ENCODE measurements at regions of chr10 and their contacts with region 1.

Region 1: GRCh38 chr10:68471586-68472408 is at the start of gene DNA2:
- DNase-seq: peak; percentile 96 to 97
- H3K4me3 ChIP-seq: peak within 1 kb of the TSS; percentile 79
- H3K4me3 Mint-ChIP-seq: peak within 1 kb of the TSS; percentile 93
- H3K27ac Mint-ChIP-seq: peak within 1 kb of the TSS; percentile 98
- H3K4me1 ChIP-seq: peaks cover 13% of the 10 kb centered on the region
- H3K4me1 Mint-ChIP-seq: peaks cover 23% of the 10 kb centered on the region
- H3K27me3 ChIP-seq: no peaks in the 10 kb centered on the region
- H3K27me3 Mint-ChIP-seq: no peaks in the 10 kb centered on the region
- CTCF ChIP-seq: no peak
- total RNA-seq, gene DNA2: 85.5 and 88.1 TPM in 2 replicates

Region 2: DNA sequence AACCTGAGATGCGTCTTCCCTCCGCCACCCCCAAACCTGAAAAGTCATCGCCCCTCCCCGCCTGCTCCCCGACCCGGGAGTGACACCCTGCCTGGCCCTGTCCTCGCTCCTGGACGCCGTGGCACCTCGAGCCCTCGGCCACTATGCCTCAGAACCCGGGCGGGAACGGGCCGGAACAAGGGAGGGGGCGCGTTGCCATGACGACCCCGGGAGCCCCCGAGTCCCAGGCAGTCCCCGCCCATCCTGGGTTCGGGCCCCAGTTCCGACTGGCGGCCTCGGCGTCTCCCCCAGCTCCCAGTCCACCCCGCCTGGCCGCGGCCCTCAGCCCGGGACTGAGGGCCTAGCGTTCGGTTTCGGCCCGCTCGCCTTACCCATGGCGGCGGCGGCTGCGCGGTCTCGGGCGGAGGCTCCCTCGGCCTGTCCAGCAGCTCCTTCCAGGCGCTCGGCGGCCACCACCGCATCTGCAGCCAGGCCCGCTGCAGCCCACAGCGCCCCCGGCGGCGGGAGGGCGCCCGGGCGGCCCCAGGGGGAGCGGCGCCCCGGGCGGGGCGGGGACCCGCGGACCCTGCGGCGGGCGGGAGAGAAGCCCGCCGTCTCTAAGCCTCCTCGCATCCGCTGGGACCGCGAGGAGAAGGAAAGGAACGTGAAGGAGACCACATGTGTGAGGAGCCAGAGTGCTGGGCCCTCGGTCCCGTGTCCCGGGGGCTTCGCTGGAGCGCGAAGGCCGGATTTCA is 64.8 kb before region 1 on chr10 and contains the start of gene RUFY2:
- CTCF ChIA-PET with region 1: interaction called, 5 read pairs
- POLR2A ChIA-PET with region 1: interaction called, 6 read pairs
- intact Hi-C with region 1: loop called (anchors 2 kb)
- DNase-seq: peak; percentile 89 to 98
- H3K4me3 ChIP-seq: peak within 1 kb of the TSS; percentile 99
- H3K4me3 Mint-ChIP-seq: peak within 1 kb of the TSS; percentile 95
- H3K27ac Mint-ChIP-seq: peak within 1 kb of the TSS; percentile 97
- H3K4me1 ChIP-seq: peaks cover 7% of the 10 kb centered on the region; the same call in 1 of the 2 replicates
- H3K4me1 Mint-ChIP-seq: peaks cover 16% of the 10 kb centered on the region
- H3K27me3 ChIP-seq: no peaks in the 10 kb centered on the region
- H3K27me3 Mint-ChIP-seq: no peaks in the 10 kb centered on the region
- CTCF ChIP-seq: peak; percentile 63 to 81
- total RNA-seq, gene RUFY2: 42.4 and 44.0 TPM in 2 replicates

Region 3: GRCh38 chr10:68435803-68436202 is 36.0 kb before region 1 on chr10:
- CTCF ChIA-PET with region 1: no interaction called
- POLR2A ChIA-PET with region 1: no interaction called
- intact Hi-C with region 1: no loop called
- DNase-seq: no peak
- H3K4me3 ChIP-seq: no peak overlapping the region
- H3K4me3 Mint-ChIP-seq: no peak overlapping the region
- H3K27ac Mint-ChIP-seq: no peak overlapping the region
- H3K4me1 ChIP-seq: no peaks in the 10 kb centered on the region
- H3K4me1 Mint-ChIP-seq: no peaks in the 10 kb centered on the region
- H3K27me3 ChIP-seq: no peaks in the 10 kb centered on the region
- H3K27me3 Mint-ChIP-seq: no peaks in the 10 kb centered on the region
- CTCF ChIP-seq: no peak

Region 4: GRCh38 chr10:68489919-68490318 is 18.1 kb after region 1 on chr10:
- CTCF ChIA-PET with region 1: no interaction called
- POLR2A ChIA-PET with region 1: no interaction called
- intact Hi-C with region 1: loop called (anchors 2 kb)
- DNase-seq: no peak
- H3K4me3 ChIP-seq: no peak overlapping the region
- H3K4me3 Mint-ChIP-seq: no peak overlapping the region
- H3K27ac Mint-ChIP-seq: no peak overlapping the region
- H3K4me1 ChIP-seq: no peaks in the 10 kb centered on the region
- H3K4me1 Mint-ChIP-seq: no peaks in the 10 kb centered on the region
- H3K27me3 ChIP-seq: no peaks in the 10 kb centered on the region
- H3K27me3 Mint-ChIP-seq: no peaks in the 10 kb centered on the region
- CTCF ChIP-seq: no peak

Region 5: DNA sequence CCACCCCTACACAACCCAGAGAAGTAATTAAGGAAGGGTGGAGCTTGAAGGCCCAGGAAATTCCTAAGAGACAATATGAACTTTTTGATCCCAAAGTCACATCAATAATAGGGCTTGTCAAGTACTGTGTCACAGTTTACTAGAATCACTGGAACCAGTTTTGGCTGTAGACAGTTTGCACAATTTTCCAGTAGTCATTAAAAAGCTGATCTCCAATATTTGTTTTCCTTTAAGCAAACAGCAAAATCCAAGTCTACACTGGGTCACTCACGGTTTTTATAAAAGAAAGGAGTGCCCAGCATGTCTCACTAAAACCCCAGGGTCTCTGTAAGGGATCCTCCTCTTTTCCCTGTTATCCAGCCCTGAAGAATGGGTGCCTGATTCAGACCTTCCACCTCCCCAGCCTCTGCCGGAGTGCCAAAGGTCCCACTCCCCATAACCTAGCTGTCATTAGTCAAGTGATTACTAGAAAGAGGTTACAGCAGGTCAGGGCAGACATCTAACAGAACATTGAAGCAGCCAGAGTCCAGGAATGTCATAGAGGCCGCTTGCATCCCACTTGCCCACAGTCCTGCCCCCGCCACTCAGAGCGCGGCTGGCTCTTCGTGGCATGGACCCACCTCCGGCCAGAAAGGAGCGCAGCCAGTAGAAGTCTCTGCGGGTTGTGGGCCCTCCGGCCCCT is 55.0 kb after region 1 on chr10:
- CTCF ChIA-PET with region 1: no interaction called
- POLR2A ChIA-PET with region 1: no interaction called
- intact Hi-C with region 1: loop called (anchors 1 kb)
- DNase-seq: no peak
- H3K4me3 ChIP-seq: peak overlapping the region; percentile 62
- H3K4me3 Mint-ChIP-seq: peak overlapping the region; percentile 84
- H3K27ac Mint-ChIP-seq: peak overlapping the region; percentile 89
- H3K4me1 ChIP-seq: peaks cover 9% of the 10 kb centered on the region
- H3K4me1 Mint-ChIP-seq: peaks cover 5% of the 10 kb centered on the region
- H3K27me3 ChIP-seq: no peaks in the 10 kb centered on the region
- H3K27me3 Mint-ChIP-seq: no peaks in the 10 kb centered on the region
- CTCF ChIP-seq: no peak

Region 6: DNA sequence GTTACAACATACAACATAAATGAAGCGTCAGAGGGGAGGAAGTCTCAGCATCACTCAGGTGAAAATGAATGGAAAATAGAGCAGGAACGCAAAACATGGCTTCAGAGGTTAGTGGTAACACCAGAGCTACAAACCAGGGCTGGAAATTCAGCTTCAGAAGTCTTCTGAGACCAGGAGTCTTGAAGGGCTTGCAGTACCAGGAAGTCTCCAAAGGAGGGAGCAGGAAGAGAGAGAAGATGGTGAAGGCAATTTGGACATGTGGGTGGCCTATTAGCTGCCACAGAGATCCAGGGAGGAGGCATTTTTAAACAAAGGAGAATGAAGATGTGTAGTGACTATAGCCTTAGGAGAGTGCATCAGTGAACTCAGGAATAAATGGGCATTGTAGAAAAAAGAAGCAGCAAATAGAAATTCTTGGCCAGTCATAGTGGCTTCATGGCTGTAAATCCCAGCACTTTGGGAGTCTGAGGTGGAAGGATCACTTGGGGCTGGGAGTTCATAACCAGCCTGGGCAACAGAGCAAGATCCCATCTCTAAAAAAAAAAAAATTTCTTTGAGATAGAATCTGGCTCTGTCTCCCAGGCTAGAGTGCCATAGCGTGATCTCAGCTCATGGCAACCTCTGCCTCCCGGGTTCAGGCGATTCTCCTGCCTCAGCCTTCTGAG is 79.1 kb after region 1 on chr10:
- CTCF ChIA-PET with region 1: no interaction called
- POLR2A ChIA-PET with region 1: no interaction called
- intact Hi-C with region 1: no loop called
- DNase-seq: peak; percentile 84
- H3K4me3 ChIP-seq: no peak overlapping the region
- H3K4me3 Mint-ChIP-seq: no peak overlapping the region
- H3K27ac Mint-ChIP-seq: no peak overlapping the region
- H3K4me1 ChIP-seq: peaks cover 18% of the 10 kb centered on the region; the same call in 1 of the 2 replicates
- H3K4me1 Mint-ChIP-seq: peaks cover 14% of the 10 kb centered on the region
- H3K27me3 ChIP-seq: no peaks in the 10 kb centered on the region
- H3K27me3 Mint-ChIP-seq: no peaks in the 10 kb centered on the region
- CTCF ChIP-seq: peak; percentile 92 to 97

Region 7: GRCh38 chr10:68576118-68576517 is 104.3 kb after region 1 on chr10:
- CTCF ChIA-PET with region 1: no interaction called
- POLR2A ChIA-PET with region 1: no interaction called
- intact Hi-C with region 1: no loop called
- DNase-seq: peak in 1 of 2 experiments; percentile 36
- H3K4me3 ChIP-seq: no peak overlapping the region
- H3K4me3 Mint-ChIP-seq: no peak overlapping the region
- H3K27ac Mint-ChIP-seq: no peak overlapping the region
- H3K4me1 ChIP-seq: no peaks in the 10 kb centered on the region
- H3K4me1 Mint-ChIP-seq: no peaks in the 10 kb centered on the region
- H3K27me3 ChIP-seq: no peaks in the 10 kb centered on the region
- H3K27me3 Mint-ChIP-seq: no peaks in the 10 kb centered on the region
- CTCF ChIP-seq: peak in 1 of 2 experiments; percentile 32

Region 8: GRCh38 chr10:68586606-68587305 is 115.0 kb after region 1 on chr10:
- CTCF ChIA-PET with region 1: no interaction called
- POLR2A ChIA-PET with region 1: no interaction called
- intact Hi-C with region 1: no loop called
- DNase-seq: no peak
- H3K4me3 ChIP-seq: no peak overlapping the region
- H3K4me3 Mint-ChIP-seq: no peak overlapping the region
- H3K27ac Mint-ChIP-seq: no peak overlapping the region
- H3K4me1 ChIP-seq: no peaks in the 10 kb centered on the region
- H3K4me1 Mint-ChIP-seq: no peaks in the 10 kb centered on the region
- H3K27me3 ChIP-seq: no peaks in the 10 kb centered on the region
- H3K27me3 Mint-ChIP-seq: no peaks in the 10 kb centered on the region
- CTCF ChIP-seq: no peak